Right ventricle myocardium superior (tissue), 1 donor: ENCODE measurements at regions of chr15 and their contacts with region 1.

Region 1: GRCh38 chr15:65980824-65981456 is 111.6 kb downstream of the RAB11A start:
- DNase-seq: peak; percentile 74
- ATAC-seq: peak; percentile 80

Region 2: GRCh38 chr15:66153549-66154415 is 172.8 kb after region 1 on chr15:
- intact Hi-C with region 1: loop called (anchors 5 kb)
- DNase-seq: no peak
- ATAC-seq: no peak

Region 3: GRCh38 chr15:66287461-66288057 is 306.6 kb after region 1 on chr15:
- intact Hi-C with region 1: loop called (anchors 10 kb)
- DNase-seq: no peak
- ATAC-seq: peak; percentile 39